Right lobe of liver (tissue), 6 donors: ENCODE measurements at regions of chr4 and their contacts with region 1.

Region 1: DNA sequence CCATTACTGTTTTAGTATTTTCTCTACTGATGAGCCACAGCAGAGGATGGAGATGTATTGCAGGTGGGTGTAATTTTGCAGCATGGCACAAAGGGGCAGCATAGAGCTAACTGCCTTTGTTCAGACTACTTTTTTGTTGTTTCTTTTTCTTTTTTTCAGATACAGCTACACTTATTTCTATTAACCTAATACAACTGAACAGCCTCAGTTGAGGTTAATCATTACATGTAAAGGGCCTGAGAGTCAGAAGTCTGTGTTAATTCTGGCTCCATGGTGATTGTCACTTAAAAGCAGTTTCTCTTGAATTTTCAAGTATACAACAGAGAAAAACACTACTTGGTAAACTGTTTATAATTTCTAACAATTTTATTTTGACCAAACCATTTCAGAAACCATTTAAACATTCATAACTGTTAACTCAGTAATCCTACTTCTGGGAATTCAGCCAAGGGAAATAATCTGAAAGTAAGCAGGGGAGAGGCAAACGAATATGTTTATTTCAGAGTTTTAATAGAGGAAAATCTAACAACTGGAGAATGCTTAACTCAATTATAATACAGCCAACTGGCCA is 13.9 kb upstream of the PPEF2 start:
- DNase-seq: peak in 1 of 3 donors; percentile 58
- ATAC-seq: peak; percentile 83 to 92 (median 90)
- H3K4me3 ChIP-seq: no peak overlapping the region
- H3K27ac ChIP-seq: peak overlapping the region in 2 of 3 donors; percentile 19 to 58
- H3K4me1 ChIP-seq: peaks cover 0 to 26% (median 9%) of the 10 kb centered on the region in 4 donors
- H3K27me3 ChIP-seq: no peaks in the 10 kb centered on the region
- CTCF ChIP-seq: peak; percentile 82 to 91 (median 86)
- POLR2A ChIP-seq: no peak

Region 2: GRCh38 chr4:75673027-75673958 is 242.9 kb before region 1 on chr4 and contains the start of gene G3BP2:
- intact Hi-C with region 1: no loop called
- DNase-seq: peak; percentile 99
- ATAC-seq: peak; percentile 97 to 99 (median 98)
- H3K4me3 ChIP-seq: peak within 1 kb of the TSS; percentile 81 to 88 (median 85)
- H3K27ac ChIP-seq: peak within 1 kb of the TSS; percentile 86 to 93 (median 92)
- H3K4me1 ChIP-seq: peaks cover 0 to 15% (median 0%) of the 10 kb centered on the region in 4 donors
- H3K27me3 ChIP-seq: no peaks in the 10 kb centered on the region
- CTCF ChIP-seq: no peak
- POLR2A ChIP-seq: peak; percentile 94
- total RNA-seq, gene G3BP2: 47.6 to 68.9 (median 64.5) TPM

Region 3: DNA sequence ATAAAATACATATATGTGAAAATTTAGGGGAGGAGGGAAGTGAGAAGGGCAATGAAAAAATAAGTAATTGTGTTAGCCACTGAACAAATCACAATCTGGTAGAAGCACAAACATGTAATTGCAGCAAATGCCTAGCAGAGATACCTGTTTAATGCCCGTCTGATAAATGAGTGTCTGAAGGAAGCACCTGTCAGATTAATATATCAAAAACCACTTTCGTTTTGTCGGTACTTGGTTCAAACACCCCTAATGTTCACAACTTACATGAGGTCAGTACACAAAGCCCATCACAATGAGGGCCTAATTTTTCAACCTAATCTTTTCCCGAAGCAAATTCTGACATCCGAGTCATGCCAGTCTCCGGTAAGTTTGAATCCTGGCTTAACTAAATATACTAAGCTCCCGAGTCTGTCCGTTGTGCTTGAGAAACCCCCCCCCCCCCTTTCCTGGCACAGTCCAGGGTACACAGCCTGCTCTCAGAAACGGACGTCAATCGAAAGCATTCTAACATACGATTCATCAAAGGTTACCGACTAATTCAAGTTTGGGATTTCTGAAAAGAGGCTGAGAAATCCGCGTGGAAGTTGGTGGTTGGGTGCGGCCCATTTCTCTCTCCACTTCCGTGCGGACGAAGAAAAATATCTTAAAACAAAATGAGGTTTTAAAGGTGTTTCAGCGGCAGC is 73.8 kb after region 1 on chr4:
- intact Hi-C with region 1: loop called in 1 of 2 experiments (anchors 5 kb)
- DNase-seq: no peak
- ATAC-seq: peak; percentile 8 to 29 (median 20)
- H3K4me3 ChIP-seq: peak overlapping the region; percentile 78 to 91 (median 87)
- H3K27ac ChIP-seq: peak overlapping the region in 2 of 3 donors; percentile 30 to 39
- H3K4me1 ChIP-seq: peaks cover 0 to 17% (median 8%) of the 10 kb centered on the region in 4 donors
- H3K27me3 ChIP-seq: no peaks in the 10 kb centered on the region
- CTCF ChIP-seq: no peak
- POLR2A ChIP-seq: no peak

Region 4: GRCh38 chr4:76087007-76087769 is 171.0 kb after region 1 on chr4:
- intact Hi-C with region 1: loop called in 1 of 2 experiments (anchors 10 kb)
- DNase-seq: peak in 2 of 3 donors; percentile 24 to 66
- ATAC-seq: peak; percentile 91 to 97 (median 95)
- H3K4me3 ChIP-seq: no peak overlapping the region
- H3K27ac ChIP-seq: no peak overlapping the region
- H3K4me1 ChIP-seq: peaks cover 0 to 15% (median 1%) of the 10 kb centered on the region in 4 donors
- H3K27me3 ChIP-seq: no peaks in the 10 kb centered on the region
- CTCF ChIP-seq: peak; percentile 35 to 67 (median 60)
- POLR2A ChIP-seq: no peak

Region 5: GRCh38 chr4:76108467-76109181 is 192.4 kb after region 1 on chr4:
- intact Hi-C with region 1: no loop called
- DNase-seq: no peak
- ATAC-seq: no peak
- H3K4me3 ChIP-seq: no peak overlapping the region
- H3K27ac ChIP-seq: no peak overlapping the region
- H3K4me1 ChIP-seq: no peaks in the 10 kb centered on the region
- H3K27me3 ChIP-seq: no peaks in the 10 kb centered on the region
- CTCF ChIP-seq: no peak
- POLR2A ChIP-seq: no peak

Region 6: GRCh38 chr4:76213415-76214176 is 297.4 kb after region 1 on chr4 and contains the start of gene SCARB2:
- intact Hi-C with region 1: no loop called
- DNase-seq: peak; percentile 93 to 94 (median 93)
- ATAC-seq: peak; percentile 75 to 92 (median 85)
- H3K4me3 ChIP-seq: peak within 1 kb of the TSS; percentile 63 to 80 (median 79)
- H3K27ac ChIP-seq: peak within 1 kb of the TSS; percentile 92 to 99 (median 93)
- H3K4me1 ChIP-seq: peaks cover 0 to 78% (median 35%) of the 10 kb centered on the region in 4 donors
- H3K27me3 ChIP-seq: no peaks in the 10 kb centered on the region
- CTCF ChIP-seq: no peak
- POLR2A ChIP-seq: peak; percentile 97
- total RNA-seq, gene SCARB2: 102 to 133 (median 125) TPM